Keratinocyte (primary cell): ENCODE measurements at regions of chr2 and their contacts with region 1.

Region 1: DNA sequence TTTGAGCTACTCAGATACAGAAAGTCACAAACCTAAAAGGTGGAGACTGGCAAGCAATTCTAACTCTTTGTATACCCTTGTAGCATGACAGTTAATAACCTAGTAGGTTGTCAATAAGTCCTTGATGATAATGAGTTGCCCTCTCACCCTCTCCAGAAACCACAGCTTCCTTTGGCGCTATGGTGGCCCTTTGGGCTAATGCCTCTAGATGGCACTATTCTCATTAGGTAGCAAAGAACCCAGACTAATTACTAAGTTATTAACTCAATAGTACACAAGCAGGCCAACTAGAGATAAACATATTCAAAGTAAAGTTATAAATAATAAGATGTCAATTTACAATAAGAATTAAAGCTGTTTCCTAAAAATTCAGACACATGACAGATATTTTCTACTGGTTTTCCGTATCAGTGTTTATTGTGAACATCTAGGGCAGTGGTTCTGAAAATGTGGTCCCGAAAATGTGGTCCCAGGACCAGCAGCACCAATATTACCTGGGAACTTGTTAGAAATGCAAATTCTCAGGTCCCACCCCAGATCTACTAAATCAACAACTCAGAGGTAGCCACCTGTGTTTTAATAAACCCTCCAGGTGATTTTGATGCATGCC is 41.1 kb downstream of the LDAH start:
- DNase-seq: peak; percentile 2
- H3K4me3 ChIP-seq: no peak overlapping the region
- H3K27ac ChIP-seq: no peak overlapping the region
- H3K4me1 ChIP-seq: no peaks in the 10 kb centered on the region
- H3K27me3 ChIP-seq: no peaks in the 10 kb centered on the region
- CTCF ChIP-seq: peak; percentile 67 to 75 (median 69)

Region 2: DNA sequence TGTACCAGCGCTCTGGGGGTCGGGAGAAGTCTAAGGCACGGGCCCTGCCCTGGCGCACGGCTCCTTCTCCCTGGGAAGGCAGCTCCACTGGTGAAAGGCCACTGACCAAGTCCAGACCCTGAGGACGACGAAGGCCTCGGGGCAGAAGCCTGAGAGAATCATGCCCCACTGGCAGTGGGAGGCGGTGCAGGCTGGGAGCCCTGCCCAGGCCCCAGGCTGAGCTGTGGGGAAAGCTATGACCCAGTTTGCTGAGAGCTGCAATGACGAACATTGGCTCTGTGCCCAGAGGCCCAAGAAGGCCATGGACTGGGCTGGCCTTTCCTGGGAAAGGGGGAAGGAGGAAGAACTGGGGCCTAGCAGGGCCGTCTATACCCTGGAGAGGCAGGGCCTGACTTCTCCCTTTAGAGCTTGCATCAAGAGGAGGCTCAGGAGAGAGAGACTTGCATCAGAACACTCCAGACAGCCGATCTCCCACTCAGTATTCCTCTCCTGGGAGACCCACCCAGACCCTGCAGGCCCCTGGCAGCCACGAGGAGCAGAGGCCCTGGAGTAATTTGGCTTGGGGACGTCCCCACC is 163.8 kb before region 1 on chr2:
- dilution Hi-C with region 1: no loop called
- DNase-seq: no peak
- H3K4me3 ChIP-seq: no peak overlapping the region
- H3K27ac ChIP-seq: no peak overlapping the region
- H3K4me1 ChIP-seq: peaks cover 19% of the 10 kb centered on the region
- H3K27me3 ChIP-seq: no peaks in the 10 kb centered on the region
- CTCF ChIP-seq: peak in 1 of 3 experiments; percentile 17

Region 3: DNA sequence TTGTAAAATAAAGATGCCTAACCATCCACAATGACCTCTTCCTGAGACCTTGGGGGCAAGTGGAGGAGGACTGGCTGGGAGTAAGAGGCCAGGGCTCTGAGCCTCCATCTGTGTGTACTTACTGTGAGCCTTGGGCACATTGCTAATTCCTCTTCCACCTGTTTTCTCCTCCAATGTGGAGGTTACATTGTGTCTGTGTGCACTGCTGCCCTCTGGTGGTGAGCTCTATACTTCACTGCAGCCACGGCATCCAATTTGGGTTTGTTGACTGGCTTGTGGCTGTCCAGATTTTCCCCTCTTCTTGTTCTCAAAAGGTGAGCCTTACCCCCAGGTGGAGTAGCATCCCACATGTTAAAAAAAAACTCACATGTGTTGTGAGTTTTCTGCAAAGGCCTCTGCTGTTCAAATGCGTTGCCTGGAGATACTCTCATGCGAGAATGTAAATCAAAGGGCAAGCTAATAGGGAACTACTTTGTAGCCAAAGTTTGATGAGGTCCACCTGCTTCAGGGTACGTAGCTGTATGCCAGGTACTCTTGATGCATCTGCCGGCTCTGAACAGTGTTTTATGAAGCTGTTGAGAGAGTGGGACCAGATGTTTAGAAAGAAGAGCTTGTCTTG is 181.3 kb after region 1 on chr2:
- dilution Hi-C with region 1: loop called (anchors 25 kb)
- DNase-seq: peak; percentile 21
- H3K4me3 ChIP-seq: no peak overlapping the region
- H3K27ac ChIP-seq: no peak overlapping the region
- H3K4me1 ChIP-seq: no peaks in the 10 kb centered on the region
- H3K27me3 ChIP-seq: peaks cover 12% of the 10 kb centered on the region
- CTCF ChIP-seq: peak; percentile 85 to 97 (median 93)